ENCODE measurements at regions of chr20 and their contacts with region 1.

Region 1: DNA sequence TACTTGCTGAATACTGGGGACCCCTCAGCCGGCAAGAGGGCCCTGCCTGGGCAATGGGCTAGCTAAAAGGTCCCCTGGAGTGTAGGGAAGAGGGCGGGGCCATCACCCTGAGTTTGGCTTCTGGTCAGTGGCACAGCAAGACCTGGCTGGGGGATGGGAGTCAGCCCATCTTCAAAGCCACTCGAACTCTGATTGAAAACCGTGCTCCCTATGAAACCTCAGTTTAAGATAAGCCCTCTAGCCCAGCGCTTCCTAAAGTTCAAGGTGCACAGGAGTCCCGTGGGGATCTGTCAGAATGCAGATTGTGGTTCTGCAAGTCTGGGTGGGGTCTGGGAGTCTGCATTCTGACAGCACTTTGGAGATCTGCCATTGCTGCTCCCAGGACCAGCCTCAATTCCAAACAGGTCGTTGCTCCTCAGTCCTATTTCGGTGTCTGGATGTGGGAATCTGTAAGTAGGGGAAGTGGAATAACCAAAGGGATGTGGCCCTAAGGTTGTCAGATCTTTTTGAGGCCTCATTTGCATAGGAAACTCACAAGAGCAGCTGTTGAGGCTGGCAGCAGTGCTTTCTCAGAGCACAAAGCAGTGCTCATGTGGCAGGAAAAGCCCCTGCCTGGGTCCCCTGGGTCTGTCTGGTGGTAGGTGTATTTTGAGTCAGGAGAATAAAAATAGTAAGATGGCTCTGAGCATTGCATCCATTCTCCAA is 85.3 kb upstream of the SCP2D1 start:
- DNase-seq: peak; percentile 40
- ATAC-seq: peak; percentile 96
- H3K4me3 Mint-ChIP-seq: peak overlapping the region; percentile 64
- H3K27ac Mint-ChIP-seq: peak overlapping the region; percentile 70
- H3K4me1 Mint-ChIP-seq: peaks cover 42% of the 10 kb centered on the region
- H3K27me3 Mint-ChIP-seq: no peaks in the 10 kb centered on the region
- CTCF ChIP-seq: no peak

Region 2: GRCh38 chr20:18678549-18679419 is 49.5 kb before region 1 on chr20:
- CTCF ChIA-PET with region 1: no interaction called
- POLR2A ChIA-PET with region 1: no interaction called
- intact Hi-C with region 1: loop called (anchors 10 kb)
- DNase-seq: no peak
- ATAC-seq: peak; percentile 47
- H3K4me3 Mint-ChIP-seq: peak overlapping the region; percentile 41
- H3K27ac Mint-ChIP-seq: peak overlapping the region; percentile 76
- H3K4me1 Mint-ChIP-seq: peaks cover 27% of the 10 kb centered on the region
- H3K27me3 Mint-ChIP-seq: no peaks in the 10 kb centered on the region
- CTCF ChIP-seq: no peak